Cardiac septum (tissue), 1 donor: ENCODE measurements at regions of chr9 and their contacts with region 1.

Region 1: DNA sequence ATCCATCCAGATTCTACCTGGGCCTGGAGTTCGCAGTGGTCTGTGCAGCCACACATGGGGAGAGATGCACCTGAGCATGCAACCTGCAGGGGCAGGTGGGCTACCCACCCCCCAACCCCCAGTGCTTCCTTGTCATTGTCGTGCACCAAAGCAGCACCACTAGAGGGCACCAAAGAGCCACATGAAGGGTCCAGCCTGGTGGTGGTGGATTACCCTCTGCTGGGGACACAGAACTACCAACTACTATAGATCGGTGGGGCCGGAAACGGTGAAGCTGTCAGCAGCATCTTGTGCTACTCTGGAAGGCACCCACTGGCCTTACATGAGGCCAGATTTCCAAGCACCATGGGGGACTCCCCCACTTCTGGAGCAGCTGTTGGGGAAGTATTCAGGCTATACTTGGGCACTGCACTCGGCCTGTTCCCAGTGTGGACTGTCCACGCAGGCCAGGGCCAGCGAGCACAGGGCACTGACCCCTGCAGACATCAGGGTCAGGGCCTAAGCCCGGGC is 60.2 kb upstream of the TBC1D2 start:
- DNase-seq: peak; percentile 84

Region 2: DNA sequence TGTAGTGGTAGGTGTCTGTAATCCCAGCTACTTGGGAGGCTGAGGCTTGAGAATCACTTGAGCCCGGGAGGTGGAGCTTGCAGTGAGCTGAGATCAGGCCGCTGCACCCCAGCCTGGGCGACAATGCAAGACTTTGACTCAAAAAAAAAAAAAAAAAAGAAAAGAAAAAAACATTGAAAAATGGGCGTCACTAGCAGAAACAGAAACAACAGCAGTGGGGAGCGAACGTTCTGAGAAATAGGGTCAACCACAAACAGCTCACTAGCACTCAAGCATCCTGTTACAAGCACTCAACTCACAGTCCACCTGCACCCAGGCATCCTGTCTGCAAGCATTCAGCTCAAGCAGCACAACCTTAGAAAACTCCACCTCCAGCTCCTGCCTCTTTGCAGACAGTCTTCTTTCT is 213.7 kb before region 1 on chr9:
- intact Hi-C with region 1: no loop called
- DNase-seq: no peak

Region 3: GRCh38 chr9:98707166-98708102 is 391.8 kb after region 1 on chr9:
- intact Hi-C with region 1: loop called (anchors 5 kb)
- DNase-seq: no peak

Region 4: DNA sequence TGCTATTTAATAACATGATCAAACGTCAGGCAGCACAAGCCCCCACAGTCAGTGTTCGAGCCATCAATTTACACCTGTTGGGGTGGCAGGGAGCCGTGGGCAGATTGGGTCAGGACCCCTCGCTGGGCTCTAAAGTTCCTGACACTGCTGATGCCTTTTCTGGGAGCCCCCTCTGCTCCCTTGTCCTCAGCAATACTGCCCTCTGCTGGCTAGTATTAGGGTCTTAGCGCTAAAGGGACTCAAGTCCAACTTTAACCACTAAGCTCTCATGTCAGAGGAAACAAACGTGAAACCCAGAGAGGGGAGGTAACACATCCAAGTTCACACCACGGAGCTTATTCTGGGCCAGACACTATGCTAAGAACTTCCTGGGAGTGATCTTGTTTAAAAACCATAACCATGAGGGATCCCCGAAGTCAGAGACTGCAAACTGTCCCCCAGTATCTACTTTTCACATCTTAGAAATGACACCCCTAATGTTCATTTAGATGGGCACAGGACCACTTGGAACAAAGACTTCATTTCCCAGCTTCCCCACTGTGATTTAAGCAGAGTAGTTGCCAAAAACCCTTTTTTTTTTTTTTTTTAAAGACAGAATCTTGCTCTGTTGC is 460.3 kb after region 1 on chr9:
- intact Hi-C with region 1: loop called (anchors 2 kb)
- DNase-seq: no peak